Calu3 (cell line): ENCODE measurements at regions of chr3 and their contacts with region 1.

Region 1: GRCh38 chr3:12135029-12135657 is 23.6 kb downstream of the TIMP4 start:
- DNase-seq: peak; percentile 76
- H3K4me3 Mint-ChIP-seq: no peak overlapping the region
- H3K27ac Mint-ChIP-seq: no peak overlapping the region
- H3K4me1 Mint-ChIP-seq: peaks cover 13% of the 10 kb centered on the region
- H3K27me3 Mint-ChIP-seq: peaks cover 48% of the 10 kb centered on the region
- CTCF ChIP-seq: peak; percentile 54

Region 2: DNA sequence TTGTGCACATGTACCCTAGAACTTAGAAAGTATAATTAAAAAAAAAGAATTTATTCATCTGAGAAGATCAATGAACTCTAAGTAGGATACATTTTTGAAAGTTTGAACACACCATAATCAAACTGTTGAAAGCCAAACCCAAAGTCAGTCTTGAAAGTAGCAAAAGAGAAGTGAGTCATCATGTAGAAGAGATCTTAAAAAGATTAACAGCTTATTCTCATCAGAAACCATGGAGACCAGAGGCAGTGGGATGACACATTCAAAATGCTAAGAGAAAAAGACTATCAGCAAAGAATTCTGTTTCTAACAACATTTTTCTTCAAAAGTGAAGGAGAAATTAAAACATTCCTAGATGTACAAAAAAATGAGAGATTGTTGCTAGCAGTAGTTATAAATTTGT is 37.2 kb before region 1 on chr3:
- CTCF ChIA-PET with region 1: no interaction called
- intact Hi-C with region 1: no loop called
- DNase-seq: no peak
- H3K4me3 Mint-ChIP-seq: no peak overlapping the region
- H3K27ac Mint-ChIP-seq: no peak overlapping the region
- H3K4me1 Mint-ChIP-seq: no peaks in the 10 kb centered on the region
- H3K27me3 Mint-ChIP-seq: peaks cover 50% of the 10 kb centered on the region
- CTCF ChIP-seq: no peak

Region 3: DNA sequence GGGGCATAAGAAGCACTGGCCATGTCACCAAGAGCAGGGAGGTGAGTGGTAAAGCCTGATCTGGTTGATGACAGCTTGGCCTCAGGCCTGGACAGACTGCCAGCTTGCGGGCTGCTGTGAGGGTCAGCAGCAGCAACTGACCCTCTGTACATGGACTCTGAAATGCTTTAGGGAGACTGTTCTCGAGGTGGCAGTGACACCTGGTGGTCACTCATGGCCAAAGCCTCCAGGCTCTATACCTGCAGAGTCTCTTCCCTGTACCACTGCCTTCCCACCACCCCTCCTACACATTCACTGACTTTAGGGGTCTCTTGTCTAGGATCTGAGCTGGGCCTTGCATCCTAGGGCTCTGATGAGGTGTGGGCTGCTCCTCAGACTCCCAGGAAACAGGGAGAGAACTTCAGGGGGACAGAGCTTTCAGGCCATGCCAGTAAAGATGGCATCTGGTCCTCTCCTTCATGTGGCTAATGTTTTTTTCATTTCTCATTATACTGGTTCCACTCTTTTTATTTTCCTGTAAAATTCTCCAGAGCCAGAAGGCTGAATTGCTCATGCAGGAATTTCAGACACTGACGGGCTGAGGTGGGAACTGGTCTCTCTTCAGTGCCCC is 40.8 kb after region 1 on chr3:
- CTCF ChIA-PET with region 1: interaction called, 12 read pairs
- intact Hi-C with region 1: loop called (anchors 1 kb)
- DNase-seq: peak; percentile 77
- H3K4me3 Mint-ChIP-seq: no peak overlapping the region
- H3K27ac Mint-ChIP-seq: no peak overlapping the region
- H3K4me1 Mint-ChIP-seq: peaks cover 18% of the 10 kb centered on the region
- H3K27me3 Mint-ChIP-seq: no peaks in the 10 kb centered on the region
- CTCF ChIP-seq: peak; percentile 61

Region 4: GRCh38 chr3:12287727-12288191 is 152.6 kb after region 1 on chr3:
- CTCF ChIA-PET with region 1: interaction called, 3 read pairs
- intact Hi-C with region 1: loop called (anchors 5 kb)
- DNase-seq: peak; percentile 63
- H3K4me3 Mint-ChIP-seq: peak overlapping the region; percentile 81
- H3K27ac Mint-ChIP-seq: peak overlapping the region; percentile 84
- H3K4me1 Mint-ChIP-seq: peaks cover 16% of the 10 kb centered on the region
- H3K27me3 Mint-ChIP-seq: no peaks in the 10 kb centered on the region
- CTCF ChIP-seq: no peak

Region 5: DNA sequence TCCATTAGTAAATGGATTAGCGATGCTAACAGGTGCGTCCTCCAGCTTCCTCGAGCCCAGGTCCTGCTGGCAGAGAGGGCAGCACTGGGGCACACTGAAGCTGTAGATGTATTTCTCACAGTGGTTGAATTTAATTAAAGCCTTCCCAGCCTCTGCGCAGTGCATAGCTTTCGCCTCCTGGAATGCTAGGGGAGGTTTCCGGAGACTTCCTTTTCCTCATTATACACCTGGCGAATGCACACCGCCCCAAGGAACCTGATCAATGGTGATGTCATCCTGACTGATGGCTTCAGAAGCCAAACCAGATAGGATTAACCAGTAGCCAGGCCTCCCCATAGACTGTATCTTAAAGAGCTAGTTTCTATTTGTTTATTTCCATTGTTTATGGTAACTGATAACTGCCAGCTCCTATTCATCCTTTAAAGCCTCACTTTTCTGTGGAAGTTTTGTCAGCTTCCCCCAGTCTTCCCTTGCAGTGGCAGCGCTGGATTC is 410.2 kb after region 1 on chr3 and contains the start of gene MKRN2OS:
- CTCF ChIA-PET with region 1: no interaction called
- intact Hi-C with region 1: loop called (anchors 5 kb)
- DNase-seq: peak; percentile 78
- H3K4me3 Mint-ChIP-seq: peak within 1 kb of the TSS; percentile 60
- H3K27ac Mint-ChIP-seq: peak within 1 kb of the TSS; percentile 75
- H3K4me1 Mint-ChIP-seq: no peaks in the 10 kb centered on the region
- H3K27me3 Mint-ChIP-seq: no peaks in the 10 kb centered on the region
- CTCF ChIP-seq: no peak
- total RNA-seq, gene MKRN2OS: 2.1 and 3.9 TPM in 2 replicates

Region 6: DNA sequence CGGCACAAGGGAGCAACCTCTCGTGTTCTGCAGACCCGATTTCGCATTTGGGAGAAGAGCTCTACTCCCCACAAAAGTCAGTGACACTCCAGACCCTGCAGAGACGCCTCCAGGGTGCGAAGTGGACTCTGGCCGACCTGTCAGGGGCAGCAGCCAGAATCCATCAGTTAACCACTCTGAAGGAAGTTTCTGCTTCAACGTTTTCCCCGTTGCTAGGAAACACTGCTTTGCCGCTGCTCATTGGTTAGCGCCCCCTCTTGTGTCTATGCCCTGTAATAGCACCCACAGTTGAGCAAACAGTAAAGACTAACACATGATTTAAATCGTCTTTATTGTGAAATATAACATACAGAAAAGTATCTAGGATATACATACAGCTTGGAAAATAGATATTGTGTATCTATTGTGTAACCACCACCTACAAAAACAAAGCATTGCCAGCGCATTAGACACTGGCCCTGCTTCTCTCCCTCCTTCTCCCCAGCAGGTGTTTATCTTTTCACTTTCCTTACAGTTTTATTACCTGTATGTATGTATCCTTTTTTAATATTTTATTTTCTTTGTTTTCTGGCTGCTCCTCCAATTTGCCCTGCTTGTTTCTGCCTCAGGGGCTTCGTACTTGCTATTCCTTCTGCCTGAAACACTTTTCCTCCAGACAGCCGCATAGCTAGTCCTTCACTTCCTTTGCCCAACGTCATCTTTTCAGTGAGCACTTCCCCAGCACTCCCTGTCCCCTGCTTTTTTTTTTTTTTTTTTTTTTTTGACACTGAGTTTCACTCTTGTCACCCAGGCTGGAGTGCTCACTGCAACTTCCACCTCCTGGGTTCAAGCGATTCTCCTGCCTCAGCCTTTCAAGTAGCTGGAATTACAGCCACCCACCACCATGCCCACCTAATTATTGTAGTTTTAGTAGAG is 585.1 kb after region 1 on chr3:
- CTCF ChIA-PET with region 1: no interaction called
- intact Hi-C with region 1: loop called (anchors 5 kb)
- DNase-seq: peak; percentile 77
- H3K4me3 Mint-ChIP-seq: peak overlapping the region; percentile 11
- H3K27ac Mint-ChIP-seq: peak overlapping the region; percentile 20
- H3K4me1 Mint-ChIP-seq: peaks cover 16% of the 10 kb centered on the region
- H3K27me3 Mint-ChIP-seq: peaks cover 14% of the 10 kb centered on the region
- CTCF ChIP-seq: peak; percentile 70

Region 7: GRCh38 chr3:12891985-12892839 is 757.1 kb after region 1 on chr3:
- CTCF ChIA-PET with region 1: no interaction called
- intact Hi-C with region 1: loop called (anchors 5 kb)
- DNase-seq: peak; percentile 45
- H3K4me3 Mint-ChIP-seq: peak overlapping the region; percentile 11
- H3K27ac Mint-ChIP-seq: no peak overlapping the region
- H3K4me1 Mint-ChIP-seq: peaks cover 9% of the 10 kb centered on the region
- H3K27me3 Mint-ChIP-seq: peaks cover 59% of the 10 kb centered on the region
- CTCF ChIP-seq: peak; percentile 82